CD8-positive, alpha-beta memory T cell (primary cell): ENCODE measurements at regions of chr3 and their contacts with region 1.

Region 1: GRCh38 chr3:101849051-101849720 is at the start of gene NFKBIZ:
- DNase-seq: peak; percentile 86 to 95 (median 89)
- H3K4me3 ChIP-seq: peak within 1 kb of the TSS; percentile 92
- H3K4me3 Mint-ChIP-seq: peak within 1 kb of the TSS; percentile 95 to 100 (median 98)
- H3K27ac ChIP-seq: peak within 1 kb of the TSS; percentile 97
- H3K27ac Mint-ChIP-seq: peak within 1 kb of the TSS; percentile 97 to 100 (median 99)
- H3K4me1 ChIP-seq: peaks cover 28% of the 10 kb centered on the region
- H3K4me1 Mint-ChIP-seq: peaks cover 29 to 42% (median 38%) of the 10 kb centered on the region in 3 donors
- H3K27me3 ChIP-seq: no peaks in the 10 kb centered on the region
- H3K27me3 Mint-ChIP-seq: no peaks in the 10 kb centered on the region
- total RNA-seq, gene NFKBIZ: 32.3 to 32.9 TPM

Region 2: GRCh38 chr3:101779047-101779821 is 70.0 kb before region 1 on chr3 and contains the start of gene NXPE3:
- CTCF ChIA-PET with region 1: interaction called, 4 read pairs
- POLR2A ChIA-PET with region 1: interaction called, 11 read pairs
- DNase-seq: peak; percentile 93 to 97 (median 94)
- H3K4me3 ChIP-seq: peak within 1 kb of the TSS; percentile 68
- H3K4me3 Mint-ChIP-seq: peak within 1 kb of the TSS; percentile 89 to 97 (median 94)
- H3K27ac ChIP-seq: peak within 1 kb of the TSS; percentile 80
- H3K27ac Mint-ChIP-seq: peak within 1 kb of the TSS; percentile 97 to 99 (median 98)
- H3K4me1 ChIP-seq: peaks cover 46% of the 10 kb centered on the region
- H3K4me1 Mint-ChIP-seq: peaks cover 42 to 52% (median 52%) of the 10 kb centered on the region in 3 donors
- H3K27me3 ChIP-seq: no peaks in the 10 kb centered on the region
- H3K27me3 Mint-ChIP-seq: peaks cover 0 to 3% of the 10 kb centered on the region in 2 donors
- total RNA-seq, gene NXPE3: 16.2 to 17.2 TPM

Region 3: DNA sequence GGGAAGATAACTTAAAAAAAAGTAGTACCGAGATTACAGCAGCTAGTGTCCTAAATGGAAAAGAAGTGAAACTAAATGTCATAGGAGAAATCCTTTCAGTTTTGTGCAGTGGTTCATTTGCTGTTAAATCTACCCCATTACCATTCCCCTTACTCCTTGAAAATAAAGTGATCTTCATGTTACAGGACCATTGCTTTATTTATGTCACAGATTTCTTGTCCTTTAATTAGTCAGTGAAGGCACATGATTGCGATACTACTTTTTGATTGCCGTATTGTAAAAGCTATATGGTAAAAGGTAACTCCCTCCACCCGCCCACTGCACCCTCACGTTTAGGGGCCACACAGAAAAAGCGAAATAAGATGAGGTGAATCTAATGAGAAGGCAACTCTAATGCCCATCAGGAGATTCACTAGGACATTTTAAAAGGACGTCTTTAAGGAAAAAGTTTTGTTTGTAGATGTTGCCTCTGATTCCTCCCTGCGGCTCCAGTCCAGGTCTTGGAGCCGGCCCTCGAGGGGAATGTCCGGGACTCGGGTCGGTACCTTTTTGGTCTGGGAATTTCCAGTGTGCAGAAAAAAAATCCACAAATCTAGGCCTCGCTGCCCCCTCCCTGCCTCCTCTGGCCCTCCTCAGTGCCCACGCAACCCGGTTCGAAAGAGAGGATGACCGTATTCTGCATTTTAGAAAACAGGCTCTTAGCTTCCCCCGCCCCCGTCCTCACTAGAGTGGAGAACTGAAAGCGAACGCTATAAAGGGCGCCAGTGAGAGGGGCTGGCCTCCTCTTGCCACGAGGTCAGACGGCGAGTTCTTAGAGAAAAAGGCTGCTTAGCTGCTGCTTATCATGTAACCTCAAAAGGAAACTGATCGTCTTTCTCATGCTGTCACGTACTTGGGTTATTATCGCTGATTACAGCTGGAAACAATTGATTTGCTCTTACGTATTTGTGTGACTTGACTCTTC is 21.7 kb before region 1 on chr3:
- CTCF ChIA-PET with region 1: interaction called, 15 read pairs
- POLR2A ChIA-PET with region 1: interaction called, 63 read pairs
- DNase-seq: peak; percentile 60 to 85 (median 76)
- H3K4me3 ChIP-seq: peak overlapping the region; percentile 80
- H3K4me3 Mint-ChIP-seq: peak overlapping the region; percentile 91 to 98 (median 95)
- H3K27ac ChIP-seq: peak overlapping the region; percentile 81
- H3K27ac Mint-ChIP-seq: peak overlapping the region; percentile 96 to 99 (median 98)
- H3K4me1 ChIP-seq: peaks cover 38% of the 10 kb centered on the region
- H3K4me1 Mint-ChIP-seq: peaks cover 45 to 64% (median 54%) of the 10 kb centered on the region in 3 donors
- H3K27me3 ChIP-seq: no peaks in the 10 kb centered on the region
- H3K27me3 Mint-ChIP-seq: no peaks in the 10 kb centered on the region

Region 4: GRCh38 chr3:101873619-101874018 is 24.4 kb after region 1 on chr3:
- CTCF ChIA-PET with region 1: no interaction called
- POLR2A ChIA-PET with region 1: no interaction called
- DNase-seq: no peak
- H3K4me3 ChIP-seq: no peak overlapping the region
- H3K4me3 Mint-ChIP-seq: no peak overlapping the region
- H3K27ac ChIP-seq: no peak overlapping the region
- H3K27ac Mint-ChIP-seq: no peak overlapping the region
- H3K4me1 ChIP-seq: no peaks in the 10 kb centered on the region
- H3K4me1 Mint-ChIP-seq: no peaks in the 10 kb centered on the region
- H3K27me3 ChIP-seq: no peaks in the 10 kb centered on the region
- H3K27me3 Mint-ChIP-seq: peaks cover 0 to 2% of the 10 kb centered on the region in 2 donors

Region 5: DNA sequence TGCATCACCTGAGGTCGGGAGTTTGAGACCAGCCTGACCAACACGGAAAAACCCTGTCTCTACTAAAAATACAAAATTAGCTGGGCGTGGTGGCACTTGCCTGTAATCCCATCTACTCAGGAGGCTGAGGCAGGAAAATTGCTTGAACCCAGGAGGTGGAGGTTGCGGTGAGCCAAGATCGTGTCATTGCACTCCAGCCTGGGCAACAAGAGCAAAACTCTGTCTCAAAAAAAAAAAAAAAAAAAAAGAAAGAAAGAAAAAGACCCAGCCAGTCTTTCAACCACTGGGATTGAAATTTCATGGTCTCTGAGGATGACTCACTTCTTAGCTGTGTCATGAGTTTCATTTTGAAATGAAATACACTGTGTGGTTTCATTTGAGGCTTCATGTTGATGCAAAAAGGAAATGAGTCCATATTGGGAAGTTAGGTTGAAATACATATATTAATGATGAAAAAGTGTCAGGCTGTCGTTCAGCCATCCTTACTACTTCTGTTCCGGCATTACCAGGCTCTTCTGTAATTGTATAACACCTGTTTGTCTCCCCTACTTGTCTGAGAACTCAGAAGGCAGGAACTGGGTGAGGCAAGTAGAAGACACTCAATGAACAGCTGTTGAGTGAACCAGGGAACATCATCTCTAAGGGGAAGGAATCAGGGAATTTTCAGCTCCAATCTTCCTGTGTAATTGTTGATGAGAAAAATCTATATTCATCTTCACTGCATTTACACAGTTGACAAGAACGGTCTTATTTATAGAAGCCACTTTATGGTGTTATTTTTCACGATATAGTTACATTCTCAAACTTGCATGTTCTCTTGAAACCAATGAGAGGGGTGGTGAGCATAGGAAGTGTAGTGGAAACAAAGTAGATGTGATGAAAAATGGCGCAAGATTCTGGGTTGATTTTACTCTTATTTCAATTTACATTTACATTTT is 87.5 kb after region 1 on chr3:
- CTCF ChIA-PET with region 1: no interaction called
- POLR2A ChIA-PET with region 1: interaction called, 15 read pairs
- DNase-seq: peak in 3 of 5 donors; percentile 50 to 54 (median 51)
- H3K4me3 ChIP-seq: peak overlapping the region; percentile 24
- H3K4me3 Mint-ChIP-seq: peak overlapping the region; percentile 32 to 77 (median 72)
- H3K27ac ChIP-seq: no peak overlapping the region
- H3K27ac Mint-ChIP-seq: peak overlapping the region; percentile 15 to 82 (median 66)
- H3K4me1 ChIP-seq: peaks cover 48% of the 10 kb centered on the region
- H3K4me1 Mint-ChIP-seq: peaks cover 18 to 27% (median 25%) of the 10 kb centered on the region in 3 donors
- H3K27me3 ChIP-seq: no peaks in the 10 kb centered on the region
- H3K27me3 Mint-ChIP-seq: peaks cover 0 to 2% of the 10 kb centered on the region in 2 donors